Mammary epithelial cell (primary cell): ENCODE measurements at regions of chr13 and their contacts with region 1.

Region 1: DNA sequence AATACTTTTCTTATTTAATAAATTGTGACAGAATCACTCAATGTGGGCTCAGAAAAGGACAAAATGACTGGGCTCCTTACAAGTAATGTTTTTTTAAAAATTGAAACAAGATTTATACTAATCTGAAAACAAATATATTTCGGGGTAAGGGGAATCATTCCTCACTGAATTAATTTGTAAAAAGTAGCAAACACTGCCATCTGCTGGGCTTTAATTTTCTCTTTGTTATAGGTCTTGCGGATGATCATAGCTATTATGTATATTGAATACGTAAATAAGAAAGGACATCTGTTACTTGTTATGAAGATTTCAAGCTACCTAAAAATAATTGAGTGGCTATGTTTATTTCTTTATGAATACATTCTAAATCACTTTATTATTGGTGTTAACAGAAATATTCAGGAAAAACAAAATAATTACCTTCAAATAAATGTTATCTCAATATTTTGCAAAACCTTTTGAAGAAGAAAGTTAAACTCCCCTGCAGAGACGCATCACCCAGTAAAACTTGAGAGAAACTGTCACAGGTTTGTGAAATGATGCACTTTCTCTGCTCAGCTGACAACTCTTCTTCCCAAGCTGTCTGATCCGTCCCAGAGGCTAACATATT is 17.8 kb upstream of the ENOX1 start:
- DNase-seq: peak; percentile 64
- H3K4me3 ChIP-seq: peak overlapping the region; percentile 39 to 52 (median 40)
- H3K27ac ChIP-seq: peak overlapping the region; percentile 98
- H3K4me1 ChIP-seq: peaks cover 27% of the 10 kb centered on the region
- H3K27me3 ChIP-seq: no peaks in the 10 kb centered on the region
- CTCF ChIP-seq: peak; percentile 35 to 46

Region 2: DNA sequence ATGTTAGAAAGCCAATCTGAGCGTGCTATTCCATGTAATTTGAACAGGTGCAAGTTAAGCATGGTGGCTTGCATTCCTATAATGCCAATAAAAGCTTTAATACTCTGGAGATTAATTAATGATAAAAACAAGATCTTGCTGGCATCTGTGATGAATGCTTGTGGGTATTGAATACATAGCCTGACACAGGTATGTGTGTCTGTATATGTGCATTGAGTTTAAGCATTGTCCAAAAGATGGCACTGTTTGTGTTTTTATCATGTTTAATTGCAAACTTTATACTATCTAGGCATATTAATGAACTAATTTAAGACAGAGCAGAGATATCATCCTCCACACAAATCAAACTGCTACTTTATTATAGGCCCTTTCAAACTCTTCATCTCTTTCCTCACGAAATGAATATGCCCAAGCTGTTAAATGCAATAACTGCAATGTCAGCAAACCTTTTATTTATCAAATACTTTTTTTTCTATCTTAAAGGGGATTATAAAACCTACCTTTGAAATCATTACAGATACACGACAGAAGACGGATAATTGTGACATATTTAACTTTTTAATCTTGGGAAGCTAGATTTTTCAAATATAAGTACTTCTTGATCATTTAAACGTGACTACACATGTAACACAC is 1144.1 kb before region 1 on chr13:
- CTCF ChIA-PET with region 1: no interaction called
- dilution Hi-C with region 1: no loop called
- in situ Hi-C with region 1: no loop called
- intact Hi-C with region 1: loop called (anchors 10 kb)
- DNase-seq: peak; percentile 6
- H3K4me3 ChIP-seq: no peak overlapping the region
- H3K27ac ChIP-seq: no peak overlapping the region
- H3K4me1 ChIP-seq: no peaks in the 10 kb centered on the region
- H3K27me3 ChIP-seq: peaks cover 2% of the 10 kb centered on the region
- CTCF ChIP-seq: peak; percentile 32 to 49

Region 3: GRCh38 chr13:42969558-42970172 is 834.9 kb before region 1 on chr13:
- CTCF ChIA-PET with region 1: no interaction called
- dilution Hi-C with region 1: no loop called
- in situ Hi-C with region 1: loop called in 1 of 2 experiments (anchors 25 kb)
- intact Hi-C with region 1: loop called (anchors 2 kb)
- DNase-seq: peak; percentile 40
- H3K4me3 ChIP-seq: no peak overlapping the region
- H3K27ac ChIP-seq: no peak overlapping the region
- H3K4me1 ChIP-seq: peaks cover 7% of the 10 kb centered on the region
- H3K27me3 ChIP-seq: no peaks in the 10 kb centered on the region
- CTCF ChIP-seq: peak; percentile 84 to 85

Region 4: DNA sequence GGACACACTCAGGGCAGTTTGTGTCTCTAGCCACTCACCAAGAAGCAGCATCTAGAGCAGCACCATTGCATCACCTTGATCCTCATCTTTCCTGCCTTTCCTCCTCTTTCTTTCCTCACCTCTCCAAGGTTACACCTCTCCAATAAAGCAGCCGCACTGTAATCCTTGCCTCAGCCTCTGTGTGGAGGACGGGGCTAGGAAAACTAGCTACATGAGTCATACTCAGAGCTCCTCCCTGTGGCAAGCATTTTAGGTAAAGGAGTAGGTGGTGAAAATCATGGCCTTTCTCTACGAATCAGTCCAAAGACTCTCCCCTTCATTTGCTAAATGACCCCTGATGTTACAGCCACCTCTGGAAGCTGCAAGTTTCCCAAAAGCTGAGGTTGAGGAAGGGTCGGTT is 672.3 kb before region 1 on chr13:
- CTCF ChIA-PET with region 1: interaction called, 3 read pairs
- dilution Hi-C with region 1: no loop called
- in situ Hi-C with region 1: no loop called
- intact Hi-C with region 1: loop called (anchors 1 kb)
- DNase-seq: peak; percentile 66
- H3K4me3 ChIP-seq: no peak overlapping the region
- H3K27ac ChIP-seq: no peak overlapping the region
- H3K4me1 ChIP-seq: peaks cover 9% of the 10 kb centered on the region
- H3K27me3 ChIP-seq: no peaks in the 10 kb centered on the region
- CTCF ChIP-seq: peak; percentile 35 to 59

Region 5: GRCh38 chr13:43240278-43240677 is 564.3 kb before region 1 on chr13:
- CTCF ChIA-PET with region 1: no interaction called
- dilution Hi-C with region 1: no loop called
- in situ Hi-C with region 1: no loop called
- intact Hi-C with region 1: loop called (anchors 5 kb)
- DNase-seq: no peak
- H3K4me3 ChIP-seq: no peak overlapping the region
- H3K27ac ChIP-seq: no peak overlapping the region
- H3K4me1 ChIP-seq: peaks cover 8% of the 10 kb centered on the region
- H3K27me3 ChIP-seq: no peaks in the 10 kb centered on the region
- CTCF ChIP-seq: no peak

Region 6: DNA sequence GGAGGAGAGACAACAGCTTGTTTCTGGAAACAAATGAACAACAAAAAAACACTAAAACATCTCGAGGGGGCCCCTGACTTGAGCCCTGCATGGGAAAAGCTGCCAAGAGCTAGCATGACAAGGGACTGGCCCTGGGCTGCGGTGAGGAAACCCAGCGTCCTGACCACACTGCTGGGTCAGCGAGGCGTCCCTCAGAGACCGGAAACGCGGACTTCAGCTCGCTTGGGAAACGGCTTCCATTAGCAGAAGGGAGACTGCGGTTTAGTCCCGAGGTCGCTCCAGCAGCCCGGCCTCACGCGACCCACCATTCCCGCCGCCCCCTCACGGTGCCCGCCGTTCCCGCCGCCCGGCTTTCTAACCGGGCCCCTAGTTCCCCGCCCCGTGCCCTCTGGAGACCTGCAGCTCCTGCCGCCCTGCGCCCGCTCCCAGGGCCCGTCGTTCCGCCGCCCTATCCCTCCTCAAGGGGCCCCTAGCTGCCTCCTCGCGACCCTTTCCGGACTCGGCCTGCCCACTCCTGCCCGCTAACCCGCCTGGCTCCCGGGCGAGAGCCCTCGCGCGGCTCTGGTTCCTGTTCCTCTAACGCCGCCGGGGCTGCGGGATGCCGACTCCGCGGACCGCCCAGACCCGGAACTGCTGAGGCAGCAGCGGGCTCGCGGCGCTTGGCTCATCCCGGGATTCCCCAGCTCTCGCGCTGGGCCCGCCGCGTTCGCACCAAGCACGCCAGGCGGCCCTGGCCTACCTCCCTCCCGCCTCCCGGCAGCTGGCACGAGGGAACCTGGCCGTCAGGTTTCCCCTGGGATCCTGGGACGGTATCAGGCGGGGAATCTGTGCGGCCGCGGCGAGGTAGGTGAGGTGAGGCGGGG is 74.6 kb after region 1 on chr13 and contains the start of gene CCDC122:
- CTCF ChIA-PET with region 1: interaction called, 3 read pairs
- dilution Hi-C with region 1: no loop called
- in situ Hi-C with region 1: no loop called
- intact Hi-C with region 1: loop called (anchors 2 kb)
- DNase-seq: peak; percentile 89
- H3K4me3 ChIP-seq: peak within 1 kb of the TSS; percentile 83 to 88 (median 88)
- H3K27ac ChIP-seq: peak within 1 kb of the TSS; percentile 87
- H3K4me1 ChIP-seq: peaks cover 22% of the 10 kb centered on the region
- H3K27me3 ChIP-seq: no peaks in the 10 kb centered on the region
- CTCF ChIP-seq: no peak
- total RNA-seq, gene CCDC122: 6.7 to 12.1 TPM